ENCODE measurements at regions of chr2 and their contacts with region 1.

Region 1: GRCh38 chr2:118855451-118856279 is 8.2 kb upstream of the EN1 start:
- DNase-seq: peak; percentile 70
- H3K4me3 Mint-ChIP-seq: no peak overlapping the region
- H3K27ac Mint-ChIP-seq: no peak overlapping the region
- H3K4me1 Mint-ChIP-seq: no peaks in the 10 kb centered on the region
- H3K27me3 Mint-ChIP-seq: peaks cover 12% of the 10 kb centered on the region
- CTCF ChIP-seq: peak; percentile 99

Region 2: DNA sequence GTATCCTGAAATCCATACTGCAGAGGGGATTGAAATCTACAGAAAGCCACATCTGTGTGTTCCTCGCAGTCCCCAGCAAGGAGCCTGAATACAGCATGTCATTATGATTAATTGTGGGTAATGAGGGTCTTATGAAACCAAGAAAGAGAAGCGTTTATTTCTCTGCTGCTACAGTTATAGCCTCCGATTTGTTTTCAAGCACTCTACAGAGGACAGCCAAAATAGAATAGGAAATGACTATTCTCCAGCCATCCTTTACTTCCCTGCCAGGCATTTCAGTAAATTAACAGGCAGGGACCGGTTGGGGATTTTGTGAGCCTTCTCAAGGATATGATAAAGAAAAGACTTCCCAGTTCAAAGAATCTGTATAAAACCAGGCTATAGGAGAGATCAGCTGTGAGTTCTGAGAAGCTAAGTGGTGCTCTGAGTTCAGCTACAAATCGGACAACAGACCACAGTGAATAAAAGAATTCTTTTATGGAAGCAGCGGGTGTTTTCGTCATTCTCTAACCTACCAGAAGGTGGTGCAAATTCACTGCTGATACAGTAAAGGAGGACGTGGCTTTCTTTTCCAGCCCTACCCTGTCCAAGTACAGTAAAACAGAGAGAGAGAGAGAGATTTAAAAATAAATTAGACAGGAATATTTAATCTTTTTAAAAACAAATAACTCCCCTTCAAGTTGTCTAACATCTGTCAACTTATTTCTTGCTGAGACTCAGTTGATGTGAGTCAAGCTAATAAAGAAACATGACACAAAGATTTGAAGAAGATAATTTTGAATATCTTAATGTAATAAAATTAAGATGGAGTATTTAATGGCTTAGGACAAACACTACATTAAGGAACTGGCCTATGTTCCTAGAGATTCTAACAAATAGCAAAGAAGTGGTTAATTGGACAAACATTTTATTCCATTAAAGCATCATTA is 633.7 kb before region 1 on chr2:
- CTCF ChIA-PET with region 1: interaction called, 72 read pairs
- POLR2A ChIA-PET with region 1: no interaction called
- intact Hi-C with region 1: loop called (anchors 1 kb)
- DNase-seq: peak; percentile 72
- H3K4me3 Mint-ChIP-seq: no peak overlapping the region
- H3K27ac Mint-ChIP-seq: no peak overlapping the region
- H3K4me1 Mint-ChIP-seq: peaks cover 12% of the 10 kb centered on the region
- H3K27me3 Mint-ChIP-seq: peaks cover 3% of the 10 kb centered on the region
- CTCF ChIP-seq: peak; percentile 73

Region 3: GRCh38 chr2:118227700-118228508 is 627.8 kb before region 1 on chr2:
- CTCF ChIA-PET with region 1: interaction called, 72 read pairs
- POLR2A ChIA-PET with region 1: no interaction called
- intact Hi-C with region 1: no loop called
- DNase-seq: peak; percentile 75
- H3K4me3 Mint-ChIP-seq: no peak overlapping the region
- H3K27ac Mint-ChIP-seq: peak overlapping the region; percentile 5
- H3K4me1 Mint-ChIP-seq: peaks cover 13% of the 10 kb centered on the region
- H3K27me3 Mint-ChIP-seq: no peaks in the 10 kb centered on the region
- CTCF ChIP-seq: no peak

Region 4: GRCh38 chr2:118386641-118387302 is 468.9 kb before region 1 on chr2:
- CTCF ChIA-PET with region 1: interaction called, 10 read pairs
- POLR2A ChIA-PET with region 1: no interaction called
- intact Hi-C with region 1: no loop called
- DNase-seq: peak; percentile 70
- H3K4me3 Mint-ChIP-seq: no peak overlapping the region
- H3K27ac Mint-ChIP-seq: no peak overlapping the region
- H3K4me1 Mint-ChIP-seq: peaks cover 21% of the 10 kb centered on the region
- H3K27me3 Mint-ChIP-seq: no peaks in the 10 kb centered on the region
- CTCF ChIP-seq: no peak

Region 5: DNA sequence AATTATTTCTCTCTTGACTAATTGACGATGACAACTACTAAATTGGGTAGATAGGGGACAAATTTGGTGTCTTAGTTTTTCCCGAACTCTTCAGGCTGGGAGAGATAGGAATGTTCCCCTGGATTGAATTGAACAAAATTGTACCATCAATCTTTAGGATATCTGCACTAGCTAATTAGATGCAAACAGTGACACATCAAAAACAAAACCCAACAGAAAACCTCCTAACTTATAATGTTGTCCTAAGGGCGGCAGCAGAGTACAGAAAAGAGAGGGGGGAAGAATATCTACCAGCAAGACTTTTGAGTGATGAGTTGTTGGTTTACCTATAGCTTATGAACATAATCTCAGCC is 424.5 kb before region 1 on chr2:
- CTCF ChIA-PET with region 1: interaction called, 40 read pairs
- POLR2A ChIA-PET with region 1: interaction called, 4 read pairs
- intact Hi-C with region 1: loop called (anchors 1 kb)
- DNase-seq: peak; percentile 66
- H3K4me3 Mint-ChIP-seq: peak overlapping the region; percentile 37
- H3K27ac Mint-ChIP-seq: peak overlapping the region; percentile 85
- H3K4me1 Mint-ChIP-seq: peaks cover 26% of the 10 kb centered on the region
- H3K27me3 Mint-ChIP-seq: no peaks in the 10 kb centered on the region
- CTCF ChIP-seq: peak; percentile 35

Region 6: DNA sequence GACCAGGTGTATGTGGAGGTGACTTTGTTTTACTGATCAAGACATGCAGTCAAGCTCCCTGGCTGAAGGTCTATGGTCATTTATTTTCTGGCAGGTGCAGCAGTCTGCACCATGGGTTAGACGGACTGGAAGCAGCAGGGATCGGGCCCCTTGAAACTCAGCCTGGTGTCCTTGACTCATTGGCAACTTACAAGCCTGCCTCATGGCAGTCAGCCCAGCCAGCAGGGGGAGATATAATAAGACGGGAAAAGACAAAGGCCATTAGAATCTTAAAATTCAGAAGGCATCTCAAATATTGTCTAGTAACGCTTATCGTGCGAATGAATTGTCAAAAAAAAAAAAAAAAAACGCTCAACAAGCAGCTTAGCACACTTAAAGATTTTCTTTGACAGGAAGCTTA is 316.4 kb before region 1 on chr2:
- CTCF ChIA-PET with region 1: interaction called, 8 read pairs
- POLR2A ChIA-PET with region 1: no interaction called
- intact Hi-C with region 1: loop called (anchors 1 kb)
- DNase-seq: peak; percentile 36
- H3K4me3 Mint-ChIP-seq: no peak overlapping the region
- H3K27ac Mint-ChIP-seq: no peak overlapping the region
- H3K4me1 Mint-ChIP-seq: no peaks in the 10 kb centered on the region
- H3K27me3 Mint-ChIP-seq: no peaks in the 10 kb centered on the region
- CTCF ChIP-seq: peak; percentile 25

Region 7: DNA sequence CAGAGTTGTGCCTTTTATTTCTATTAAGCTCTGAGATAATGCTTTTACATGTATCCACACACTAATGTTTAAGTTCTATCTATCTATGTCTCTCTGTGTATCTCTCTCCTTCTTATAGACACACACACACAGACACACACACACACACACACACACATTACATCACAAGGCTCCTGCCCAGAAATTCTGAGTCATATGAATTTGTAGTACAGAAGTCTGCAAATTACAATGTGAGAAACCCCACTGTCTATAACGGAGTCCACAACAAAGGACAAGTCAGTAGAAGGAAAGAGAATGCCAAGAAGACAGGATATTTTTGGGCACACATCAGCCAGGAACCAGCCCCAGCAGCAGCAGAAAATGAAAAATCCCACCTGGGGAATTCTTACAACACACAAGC is 150.6 kb before region 1 on chr2:
- CTCF ChIA-PET with region 1: no interaction called
- POLR2A ChIA-PET with region 1: no interaction called
- intact Hi-C with region 1: no loop called
- DNase-seq: peak; percentile 43
- H3K4me3 Mint-ChIP-seq: no peak overlapping the region
- H3K27ac Mint-ChIP-seq: peak overlapping the region; percentile 44
- H3K4me1 Mint-ChIP-seq: peaks cover 18% of the 10 kb centered on the region
- H3K27me3 Mint-ChIP-seq: no peaks in the 10 kb centered on the region
- CTCF ChIP-seq: no peak

Region 8: DNA sequence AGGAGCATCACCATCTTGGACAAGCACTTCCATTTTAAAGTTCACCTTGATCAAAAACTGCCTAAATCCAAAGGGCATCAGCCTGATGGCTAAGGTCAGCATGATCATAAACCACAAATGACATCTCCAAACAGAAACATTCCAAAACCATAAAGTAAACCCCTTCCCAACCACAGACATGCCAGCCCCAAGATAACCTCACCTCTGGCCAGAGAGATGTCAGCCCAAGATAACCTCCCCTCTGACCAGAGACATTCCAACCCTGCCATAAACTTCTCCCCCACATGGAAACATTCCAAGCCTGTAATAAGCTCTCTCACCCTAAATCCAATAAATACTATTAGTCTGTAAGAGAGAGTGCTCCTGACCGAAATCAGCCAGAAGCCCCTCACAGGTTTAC is 67.7 kb after region 1 on chr2:
- CTCF ChIA-PET with region 1: no interaction called
- POLR2A ChIA-PET with region 1: no interaction called
- intact Hi-C with region 1: no loop called
- DNase-seq: no peak
- H3K4me3 Mint-ChIP-seq: no peak overlapping the region
- H3K27ac Mint-ChIP-seq: no peak overlapping the region
- H3K4me1 Mint-ChIP-seq: no peaks in the 10 kb centered on the region
- H3K27me3 Mint-ChIP-seq: peaks cover 11% of the 10 kb centered on the region
- CTCF ChIP-seq: no peak

Measured in MCF 10A (cell line).